ENCODE measurements at regions of chr1 and their contacts with region 1.

Region 1: DNA sequence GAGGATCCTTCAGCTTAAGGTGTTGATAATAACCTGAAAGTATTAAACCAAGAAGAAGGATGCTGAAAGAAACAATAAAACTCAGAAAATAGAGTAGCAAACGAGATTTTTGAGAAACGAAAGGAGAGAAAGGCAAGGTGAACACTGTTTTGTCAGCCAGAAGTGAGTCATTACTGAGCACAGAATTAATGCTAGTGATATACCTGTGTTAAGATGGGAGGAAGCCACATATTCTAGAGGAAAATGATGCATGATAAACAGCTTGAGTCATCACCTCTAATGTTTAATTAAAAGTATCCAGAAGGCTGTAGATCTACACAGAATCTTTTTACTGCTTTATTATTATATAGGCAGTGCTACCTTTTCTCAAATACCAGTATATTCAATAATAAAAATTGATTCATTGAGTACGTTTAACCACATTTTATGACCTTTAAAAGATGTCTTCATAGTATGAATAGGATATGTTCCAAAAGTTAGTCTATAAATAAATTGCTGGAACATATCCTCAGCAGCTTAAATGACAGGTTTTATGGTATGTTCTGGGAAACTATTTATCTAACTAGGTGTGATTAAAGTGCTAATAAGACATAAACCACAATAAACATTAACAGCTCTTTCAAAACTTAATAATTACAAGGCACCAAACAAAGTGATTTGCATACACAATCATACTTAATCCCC is 10.3 kb downstream of the SH3GLB1 start:
- DNase-seq: no peak
- ATAC-seq: no peak
- H3K4me3 ChIP-seq: no peak overlapping the region
- H3K27ac ChIP-seq: no peak overlapping the region
- H3K4me1 ChIP-seq: peaks cover 11% of the 10 kb centered on the region; the same call in 1 of the 2 replicates
- H3K27me3 ChIP-seq: no peaks in the 10 kb centered on the region
- CTCF ChIP-seq: no peak

Region 2: DNA sequence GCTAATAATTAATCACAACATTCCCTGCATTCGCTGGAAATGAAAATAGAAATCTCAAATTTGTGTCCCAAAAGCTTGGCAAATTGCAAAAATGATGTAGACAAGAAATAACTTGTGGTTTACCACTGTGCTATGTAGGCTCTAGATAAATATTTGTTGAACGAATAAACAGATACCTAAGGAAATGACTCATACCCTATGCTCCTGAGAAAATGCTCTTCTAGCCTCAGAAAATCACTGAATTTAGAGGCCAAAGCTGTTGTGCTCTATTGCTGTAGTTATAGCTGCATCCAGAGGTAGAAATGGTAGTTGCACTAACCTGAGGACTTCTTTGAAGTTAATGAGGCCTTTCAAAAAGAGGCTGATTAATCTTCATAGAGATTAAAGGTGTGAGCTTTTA is 864.5 kb before region 1 on chr1:
- CTCF ChIA-PET with region 1: interaction called, 11 read pairs
- POLR2A ChIA-PET with region 1: no interaction called
- in situ Hi-C with region 1: no loop called
- intact Hi-C with region 1: no loop called
- DNase-seq: peak; percentile 91
- ATAC-seq: peak; percentile 96
- H3K4me3 ChIP-seq: no peak overlapping the region
- H3K27ac ChIP-seq: peak overlapping the region; percentile 70; the same call in 1 of the 2 replicates
- H3K4me1 ChIP-seq: peaks cover 24% of the 10 kb centered on the region
- H3K27me3 ChIP-seq: no peaks in the 10 kb centered on the region
- CTCF ChIP-seq: peak; percentile 73; the same call in 1 of the 2 replicates

Region 3: GRCh38 chr1:86933562-86934377 is 219.1 kb after region 1 on chr1:
- CTCF ChIA-PET with region 1: no interaction called
- POLR2A ChIA-PET with region 1: interaction called, 20 read pairs
- in situ Hi-C with region 1: no loop called
- intact Hi-C with region 1: no loop called
- DNase-seq: no peak
- ATAC-seq: peak; percentile 75
- H3K4me3 ChIP-seq: peak overlapping the region; percentile 26 to 36
- H3K27ac ChIP-seq: peak overlapping the region; percentile 76
- H3K4me1 ChIP-seq: peaks cover 14% of the 10 kb centered on the region
- H3K27me3 ChIP-seq: no peaks in the 10 kb centered on the region
- CTCF ChIP-seq: no peak